Mammary epithelial cell (primary cell): ENCODE measurements at regions of chr1 and their contacts with region 1.

Region 1: DNA sequence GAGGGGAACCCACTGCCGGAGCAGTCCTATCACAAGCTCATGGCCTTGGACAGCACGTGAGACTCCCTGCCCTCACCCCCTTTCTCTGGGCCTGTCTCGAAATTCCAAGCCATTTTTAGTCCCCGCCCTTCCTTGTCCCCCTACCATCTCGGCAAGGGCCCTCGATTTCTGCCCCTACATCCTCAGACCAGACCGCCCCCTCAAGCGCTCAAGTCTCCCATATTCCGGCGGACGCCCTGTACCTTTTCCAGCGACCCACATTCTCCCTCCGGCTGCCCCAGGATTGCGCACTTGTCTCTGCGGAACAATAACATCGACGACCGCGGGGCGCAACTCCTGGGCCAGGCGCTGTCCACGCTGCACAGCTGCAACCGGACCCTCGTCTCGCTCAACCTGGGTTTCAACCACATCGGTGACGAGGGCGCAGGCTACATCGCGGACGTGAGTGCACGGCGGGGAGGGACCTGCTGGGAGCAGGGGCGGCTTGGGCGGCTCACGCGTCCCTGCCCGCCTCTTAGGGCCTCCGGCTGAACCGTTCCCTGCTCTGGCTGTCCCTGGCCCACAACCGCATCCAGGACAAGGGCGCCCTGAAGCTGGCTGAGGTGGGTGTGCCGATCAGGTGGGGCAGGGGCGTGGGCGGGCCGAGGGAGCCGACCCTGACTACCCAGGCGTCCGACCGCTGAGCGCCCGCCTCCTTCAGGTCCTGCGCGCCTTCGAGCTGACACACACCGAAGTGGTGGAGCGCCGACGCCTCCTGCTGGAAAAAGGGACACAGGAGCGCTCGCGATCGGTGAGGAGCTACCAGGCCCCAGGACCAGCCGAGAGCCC is 7.0 kb downstream of the LRRC71 start:
- DNase-seq: peak; percentile 72
- H3K4me3 ChIP-seq: peak overlapping the region in 2 of 3 experiments; percentile 36 to 49
- H3K27ac ChIP-seq: no peak overlapping the region
- H3K4me1 ChIP-seq: peaks cover 17% of the 10 kb centered on the region
- H3K27me3 ChIP-seq: peaks cover 33% of the 10 kb centered on the region
- CTCF ChIP-seq: peak; percentile 69 to 89

Region 2: GRCh38 chr1:156524481-156524869 is 403.0 kb before region 1 on chr1:
- CTCF ChIA-PET with region 1: no interaction called
- dilution Hi-C with region 1: no loop called
- in situ Hi-C with region 1: no loop called
- intact Hi-C with region 1: no loop called
- DNase-seq: no peak
- H3K4me3 ChIP-seq: no peak overlapping the region
- H3K27ac ChIP-seq: no peak overlapping the region
- H3K4me1 ChIP-seq: no peaks in the 10 kb centered on the region
- H3K27me3 ChIP-seq: no peaks in the 10 kb centered on the region
- CTCF ChIP-seq: no peak

Region 3: DNA sequence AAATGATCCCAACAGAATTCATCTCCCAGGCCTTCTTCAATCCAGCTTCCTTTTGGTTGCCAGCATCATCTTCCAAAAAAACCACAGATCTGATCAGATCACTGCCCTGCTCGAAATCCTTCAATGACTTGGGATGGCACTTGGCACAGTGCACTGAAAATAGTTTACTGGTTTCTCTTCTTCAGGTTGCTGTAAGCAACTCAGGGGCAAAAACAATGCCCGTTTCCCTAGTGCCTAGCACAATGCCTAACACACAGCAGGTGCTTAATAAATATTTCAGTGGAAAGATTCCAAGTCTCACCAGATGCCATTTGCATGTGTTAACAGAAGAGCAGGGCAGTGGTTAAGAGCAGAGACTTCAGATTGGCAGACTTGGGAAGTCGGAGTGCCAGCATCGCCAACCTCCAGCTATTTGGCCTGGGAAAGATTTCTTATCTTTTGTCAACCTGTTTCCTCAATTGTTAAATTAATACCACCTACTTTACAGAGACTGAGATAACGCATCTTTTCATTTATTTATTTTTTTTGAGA is 210.1 kb before region 1 on chr1:
- CTCF ChIA-PET with region 1: interaction called, 18 read pairs
- dilution Hi-C with region 1: no loop called
- in situ Hi-C with region 1: no loop called
- intact Hi-C with region 1: no loop called
- DNase-seq: no peak
- H3K4me3 ChIP-seq: no peak overlapping the region
- H3K27ac ChIP-seq: no peak overlapping the region
- H3K4me1 ChIP-seq: peaks cover 3% of the 10 kb centered on the region
- H3K27me3 ChIP-seq: no peaks in the 10 kb centered on the region
- CTCF ChIP-seq: no peak

Region 4: DNA sequence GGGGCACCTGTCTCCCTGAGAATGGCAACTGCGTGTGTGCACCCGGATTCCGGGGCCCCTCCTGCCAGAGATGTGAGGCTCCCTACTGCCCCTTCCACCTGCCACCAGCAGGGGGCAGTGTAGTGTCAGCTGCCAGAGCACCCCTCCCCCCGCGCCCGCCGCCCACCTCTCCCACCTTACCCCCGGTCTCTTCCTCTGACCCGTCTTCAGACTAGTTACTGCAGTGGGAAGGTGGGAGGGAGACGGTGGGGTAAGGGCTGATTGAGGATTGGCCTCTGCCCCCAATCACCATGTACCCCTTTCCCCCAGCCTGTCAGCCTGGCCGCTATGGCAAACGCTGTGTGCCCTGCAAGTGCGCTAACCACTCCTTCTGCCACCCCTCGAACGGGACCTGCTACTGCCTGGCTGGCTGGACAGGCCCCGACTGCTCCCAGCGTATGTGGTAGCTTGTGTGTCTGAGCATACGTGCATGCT is 17.1 kb before region 1 on chr1:
- CTCF ChIA-PET with region 1: interaction called, 4 read pairs
- dilution Hi-C with region 1: no loop called
- in situ Hi-C with region 1: no loop called
- intact Hi-C with region 1: loop called (anchors 1 kb)
- DNase-seq: no peak
- H3K4me3 ChIP-seq: no peak overlapping the region
- H3K27ac ChIP-seq: no peak overlapping the region
- H3K4me1 ChIP-seq: peaks cover 13% of the 10 kb centered on the region
- H3K27me3 ChIP-seq: no peaks in the 10 kb centered on the region
- CTCF ChIP-seq: peak; percentile 50 to 83

Region 5: DNA sequence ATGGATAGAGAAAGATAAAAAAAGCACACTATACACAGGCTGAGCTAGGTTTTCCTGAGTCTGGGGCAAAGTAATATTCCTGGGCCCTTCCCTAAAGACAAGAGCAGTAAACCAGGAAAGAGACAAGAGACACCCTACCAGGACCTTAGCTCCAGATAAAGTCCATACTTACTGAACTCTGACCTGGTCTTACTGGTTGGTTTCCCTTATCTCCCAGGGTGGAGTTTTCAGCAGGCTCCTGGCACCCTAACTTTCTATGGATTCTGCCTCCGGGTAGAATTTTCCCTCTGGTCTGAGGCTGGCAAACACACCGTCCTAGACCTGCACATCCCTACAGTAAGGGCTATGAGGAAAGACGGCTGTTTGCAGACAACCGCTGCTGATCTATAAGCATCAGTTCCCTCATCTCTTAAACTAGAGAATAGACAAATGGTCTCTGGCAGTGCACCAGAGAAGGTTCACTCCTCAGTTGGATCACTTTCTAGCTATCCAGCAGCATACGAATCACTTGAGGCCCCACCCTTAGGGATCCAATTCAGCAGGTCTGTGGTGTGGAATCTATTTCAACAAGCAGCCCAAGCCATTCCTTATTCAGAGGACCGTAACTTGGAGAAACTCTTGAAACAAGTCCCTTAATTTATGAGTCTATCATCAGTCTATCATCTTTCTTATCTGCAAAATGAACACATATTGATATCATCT is 66.2 kb after region 1 on chr1:
- CTCF ChIA-PET with region 1: no interaction called
- dilution Hi-C with region 1: no loop called
- in situ Hi-C with region 1: loop called in 1 of 2 experiments (anchors 10 kb)
- intact Hi-C with region 1: no loop called
- DNase-seq: peak; percentile 12
- H3K4me3 ChIP-seq: no peak overlapping the region
- H3K27ac ChIP-seq: no peak overlapping the region
- H3K4me1 ChIP-seq: peaks cover 16% of the 10 kb centered on the region
- H3K27me3 ChIP-seq: no peaks in the 10 kb centered on the region
- CTCF ChIP-seq: no peak

Region 6: DNA sequence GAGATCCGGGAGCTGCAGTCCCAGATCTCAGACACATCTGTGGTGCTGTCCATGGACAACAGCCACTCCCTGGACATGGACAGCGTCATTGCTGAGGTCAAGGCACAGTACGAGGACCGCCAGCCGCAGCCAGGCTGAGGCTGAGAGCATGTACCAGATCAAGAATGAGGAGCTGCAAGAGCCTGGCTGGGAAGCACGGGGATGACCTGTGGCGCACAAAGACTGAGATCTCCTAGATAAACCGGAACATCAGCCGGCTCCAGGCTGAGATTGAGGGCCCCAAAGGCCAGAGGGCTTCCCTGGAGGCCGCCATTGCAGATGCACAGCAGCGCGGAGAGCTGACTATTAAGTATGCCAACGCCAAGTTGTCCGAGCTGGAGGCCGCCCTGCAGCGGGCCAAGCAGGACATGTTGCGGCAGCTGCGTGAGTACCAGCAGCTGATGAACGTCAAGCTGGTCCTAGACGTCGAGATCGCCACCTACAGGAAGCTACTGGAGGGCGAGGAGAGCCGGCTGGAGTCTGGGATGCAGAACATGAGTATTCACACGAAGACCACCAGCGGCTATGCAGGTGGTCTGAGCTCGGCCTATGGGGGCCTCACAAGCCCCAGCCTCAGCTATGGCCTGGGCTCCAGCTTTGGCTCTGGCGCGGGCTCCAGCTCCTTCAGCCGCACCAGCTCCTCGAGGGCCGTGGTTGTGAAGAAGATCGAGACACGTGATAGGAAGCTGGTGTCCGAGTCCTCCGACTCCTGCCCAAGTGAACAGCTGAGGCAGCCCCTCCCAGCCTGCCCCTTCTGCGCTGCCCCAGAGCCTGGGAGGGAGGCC is 146.7 kb after region 1 on chr1:
- CTCF ChIA-PET with region 1: interaction called, 11 read pairs
- dilution Hi-C with region 1: no loop called
- in situ Hi-C with region 1: no loop called
- intact Hi-C with region 1: loop called (anchors 2 kb)
- DNase-seq: peak; percentile 54
- H3K4me3 ChIP-seq: no peak overlapping the region
- H3K27ac ChIP-seq: no peak overlapping the region
- H3K4me1 ChIP-seq: no peaks in the 10 kb centered on the region
- H3K27me3 ChIP-seq: peaks cover 2% of the 10 kb centered on the region
- CTCF ChIP-seq: peak; percentile 39 to 64